ENCODE measurements at regions of chr14 and their contacts with region 1.

Region 1: GRCh38 chr14:50714450-50715073 is 46.5 kb upstream of the SAV1 start:
- DNase-seq: no peak
- H3K4me3 ChIP-seq: no peak overlapping the region
- H3K27ac ChIP-seq: no peak overlapping the region
- H3K4me1 ChIP-seq: no peaks in the 10 kb centered on the region
- H3K27me3 ChIP-seq: no peaks in the 10 kb centered on the region
- CTCF ChIP-seq: peak in 7 of 11 experiments; percentile 31 to 61 (median 45)
- POLR2A ChIP-seq: no peak

Region 2: DNA sequence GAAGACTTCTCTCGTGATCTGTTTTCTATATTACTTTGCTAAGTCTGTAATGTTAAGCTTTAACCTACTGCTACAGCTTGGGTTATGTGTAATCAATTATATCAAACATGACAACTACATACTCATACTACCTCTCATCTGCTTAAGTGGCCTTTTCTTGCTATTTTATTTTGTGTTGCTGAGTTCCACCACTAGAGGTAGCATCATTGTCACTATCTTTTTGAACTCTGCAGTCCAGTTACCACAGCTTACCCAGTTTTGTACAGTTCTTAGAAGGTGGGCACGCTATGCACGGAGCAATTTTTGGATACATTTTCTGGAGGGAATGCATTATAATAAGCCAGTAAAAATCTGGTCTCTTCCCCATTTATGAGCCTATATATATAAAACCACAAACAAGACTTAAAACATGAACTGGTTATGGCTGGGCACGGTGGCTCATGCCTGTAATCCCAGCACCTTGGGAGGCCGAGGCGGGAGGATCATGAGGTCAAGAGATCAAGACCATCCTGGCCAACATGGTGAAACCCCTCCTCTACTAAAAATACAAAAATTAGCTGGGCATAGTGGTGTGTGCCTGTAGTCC is 94.9 kb before region 1 on chr14:
- intact Hi-C with region 1: loop called (anchors 10 kb)
- DNase-seq: no peak
- H3K4me3 ChIP-seq: no peak overlapping the region
- H3K27ac ChIP-seq: no peak overlapping the region
- H3K4me1 ChIP-seq: no peaks in the 10 kb centered on the region
- H3K27me3 ChIP-seq: no peaks in the 10 kb centered on the region
- CTCF ChIP-seq: peak in 9 of 11 experiments; percentile 16 to 62 (median 43)
- POLR2A ChIP-seq: no peak

Measured in spleen (tissue), 13 donors.